ENCODE measurements at regions of chr19 and their contacts with region 1.

Region 1: DNA sequence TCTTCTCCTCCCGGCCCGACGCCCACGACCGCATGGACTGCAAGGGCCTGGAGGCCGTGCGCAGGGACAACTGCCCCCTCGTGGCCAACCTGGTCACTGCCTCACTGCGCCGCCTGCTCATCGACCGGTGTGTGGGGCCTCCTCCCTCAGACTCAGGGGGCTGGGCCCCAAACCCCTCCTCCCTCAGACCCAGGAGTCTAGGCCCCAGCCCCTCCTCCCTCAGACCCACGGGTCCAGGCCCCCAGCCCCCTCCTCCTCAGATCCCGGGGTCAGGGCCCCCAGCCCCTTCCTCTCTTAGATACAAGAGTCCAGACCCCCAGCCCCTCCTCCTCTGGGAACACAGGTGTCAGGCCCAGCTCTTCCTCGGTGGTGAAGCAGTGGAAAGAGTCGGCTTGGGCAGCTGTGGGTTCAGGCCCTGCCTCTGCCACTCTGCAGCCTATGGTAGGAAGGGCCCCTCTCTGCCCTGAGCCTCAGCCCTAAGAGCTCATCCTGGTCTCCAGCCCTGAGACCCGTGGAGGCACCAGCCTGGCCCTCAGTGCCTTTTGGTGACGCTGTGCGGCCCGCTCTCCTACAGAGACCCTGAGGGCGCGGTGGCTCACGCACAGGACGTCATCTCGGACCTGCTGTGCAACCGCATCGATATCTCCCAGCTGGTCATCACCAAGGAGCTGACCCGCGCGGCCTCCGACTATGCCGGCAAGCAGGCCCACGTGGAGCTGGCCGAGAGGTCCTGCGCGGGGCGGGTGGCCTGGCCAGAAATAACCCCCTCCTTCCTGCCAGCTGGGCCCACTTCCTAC is 3.7 kb upstream of the SPIB start:
- DNase-seq: peak; percentile 48 to 82 (median 73)
- ATAC-seq: peak; percentile 90
- H3K4me3 ChIP-seq: no peak overlapping the region
- H3K4me3 Mint-ChIP-seq: no peak overlapping the region
- H3K27ac ChIP-seq: no peak overlapping the region
- H3K27ac Mint-ChIP-seq: no peak overlapping the region
- H3K4me1 ChIP-seq: no peaks in the 10 kb centered on the region
- H3K4me1 Mint-ChIP-seq: peaks cover 5% of the 10 kb centered on the region
- H3K27me3 ChIP-seq: no peaks in the 10 kb centered on the region
- H3K27me3 Mint-ChIP-seq: peaks cover 12% of the 10 kb centered on the region
- CTCF ChIP-seq: peak; percentile 67

Region 2: DNA sequence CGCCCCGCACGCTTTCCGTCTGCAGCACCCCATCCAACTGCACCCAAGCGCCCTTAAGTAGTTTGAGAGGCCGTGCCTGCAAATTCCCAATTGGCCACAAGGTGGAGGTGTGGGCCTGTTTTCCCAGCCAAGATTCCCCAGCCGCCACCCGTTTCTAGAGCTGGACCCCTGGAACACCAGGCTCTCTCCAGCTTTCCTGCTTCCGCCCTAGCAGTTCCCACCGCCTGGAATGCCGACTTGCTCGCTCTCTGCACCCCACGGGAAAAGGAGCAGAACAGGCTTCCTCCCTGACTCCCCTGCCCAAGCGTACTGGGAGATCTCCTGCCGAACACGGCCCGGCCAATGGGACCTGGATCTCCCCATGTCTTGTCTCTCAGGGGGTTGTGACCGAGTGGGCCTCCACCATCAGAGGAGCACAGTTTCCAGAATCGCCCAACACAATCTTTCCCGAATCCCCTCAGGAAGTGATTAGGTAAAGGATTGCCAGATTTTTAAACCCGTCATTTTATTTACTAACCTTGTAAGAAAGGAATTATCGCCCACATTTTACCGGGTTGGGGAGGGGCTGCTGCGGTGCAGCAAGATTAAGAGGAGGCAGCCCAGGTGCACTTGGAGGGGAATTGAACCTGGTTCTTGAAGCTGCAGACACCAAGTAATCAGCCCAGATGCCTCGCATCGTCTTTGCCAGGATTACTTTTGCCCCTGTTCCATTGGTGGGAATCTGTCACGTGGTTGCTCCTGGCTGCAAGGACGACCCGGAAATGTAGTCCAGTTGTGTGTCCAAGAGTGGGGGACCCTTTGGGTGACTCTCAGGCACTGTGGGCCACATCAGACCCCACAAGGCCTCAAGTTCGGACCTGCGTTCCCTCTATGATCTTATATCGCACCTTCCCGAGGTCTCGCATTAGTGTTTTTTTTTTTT is 46.2 kb before region 1 on chr19:
- CTCF ChIA-PET with region 1: interaction called, 15 read pairs
- POLR2A ChIA-PET with region 1: no interaction called
- intact Hi-C with region 1: loop called in 1 of 2 experiments (anchors 1 kb)
- DNase-seq: peak; percentile 59 to 91 (median 79)
- ATAC-seq: peak; percentile 81
- H3K4me3 ChIP-seq: peak overlapping the region; percentile 52 to 66
- H3K4me3 Mint-ChIP-seq: peak overlapping the region; percentile 87
- H3K27ac ChIP-seq: peak overlapping the region; percentile 32 to 49
- H3K27ac Mint-ChIP-seq: peak overlapping the region; percentile 82
- H3K4me1 ChIP-seq: peaks cover 15% of the 10 kb centered on the region
- H3K4me1 Mint-ChIP-seq: peaks cover 28% of the 10 kb centered on the region
- H3K27me3 ChIP-seq: no peaks in the 10 kb centered on the region
- H3K27me3 Mint-ChIP-seq: no peaks in the 10 kb centered on the region
- CTCF ChIP-seq: peak; percentile 86

Region 3: GRCh38 chr19:50486823-50487511 is 71.9 kb after region 1 on chr19:
- CTCF ChIA-PET with region 1: no interaction called
- POLR2A ChIA-PET with region 1: no interaction called
- intact Hi-C with region 1: no loop called
- DNase-seq: peak in 8 of 9 experiments; percentile 11 to 71 (median 52)
- ATAC-seq: peak; percentile 48
- H3K4me3 ChIP-seq: no peak overlapping the region
- H3K4me3 Mint-ChIP-seq: no peak overlapping the region
- H3K27ac ChIP-seq: no peak overlapping the region
- H3K27ac Mint-ChIP-seq: no peak overlapping the region
- H3K4me1 ChIP-seq: peaks cover 7% of the 10 kb centered on the region
- H3K4me1 Mint-ChIP-seq: peaks cover 24% of the 10 kb centered on the region
- H3K27me3 ChIP-seq: no peaks in the 10 kb centered on the region
- H3K27me3 Mint-ChIP-seq: no peaks in the 10 kb centered on the region
- CTCF ChIP-seq: peak; percentile 54

Measured in CD8-positive, alpha-beta T cell (primary cell).